ENCODE measurements at regions of chr2 and their contacts with region 1.

Region 1: GRCh38 chr2:161332371-161332967 is 24.2 kb downstream of the PSMD14 start:
- DNase-seq: no peak
- ATAC-seq: no peak
- H3K4me3 ChIP-seq: no peak overlapping the region
- H3K4me3 Mint-ChIP-seq: no peak overlapping the region
- H3K27ac ChIP-seq: no peak overlapping the region
- H3K27ac Mint-ChIP-seq: no peak overlapping the region
- H3K4me1 ChIP-seq: no peaks in the 10 kb centered on the region
- H3K4me1 Mint-ChIP-seq: peaks cover 3% of the 10 kb centered on the region
- H3K27me3 ChIP-seq: no peaks in the 10 kb centered on the region
- H3K27me3 Mint-ChIP-seq: no peaks in the 10 kb centered on the region
- CTCF ChIP-seq: no peak

Region 2: DNA sequence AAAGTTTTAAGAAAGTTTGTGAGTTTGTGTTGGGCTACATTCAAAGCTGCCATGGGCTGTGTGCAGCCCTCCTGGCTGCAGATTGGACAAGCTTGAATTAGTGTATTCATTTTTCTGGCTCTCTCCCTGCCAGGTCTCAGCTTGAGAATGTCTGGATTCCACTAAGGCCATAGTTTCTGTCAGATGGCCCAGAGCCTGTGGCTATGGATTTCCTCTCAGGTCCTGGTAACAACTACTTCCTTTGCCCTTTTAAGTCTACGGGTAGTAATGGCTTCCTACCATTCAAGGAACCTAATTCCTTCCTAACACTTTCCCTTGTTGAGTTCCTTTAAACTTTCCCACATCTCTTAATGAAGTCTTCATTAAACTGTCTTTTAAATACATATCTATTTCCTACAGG is 48.5 kb before region 1 on chr2:
- CTCF ChIA-PET with region 1: no interaction called
- POLR2A ChIA-PET with region 1: no interaction called
- intact Hi-C with region 1: no loop called
- DNase-seq: no peak
- ATAC-seq: no peak
- H3K4me3 ChIP-seq: no peak overlapping the region
- H3K4me3 Mint-ChIP-seq: no peak overlapping the region
- H3K27ac ChIP-seq: no peak overlapping the region
- H3K27ac Mint-ChIP-seq: no peak overlapping the region
- H3K4me1 ChIP-seq: peaks cover 5% of the 10 kb centered on the region
- H3K4me1 Mint-ChIP-seq: no peaks in the 10 kb centered on the region
- H3K27me3 ChIP-seq: peaks cover 0 to 3% of the 10 kb centered on the region in 2 experiments
- H3K27me3 Mint-ChIP-seq: peaks cover 34% of the 10 kb centered on the region
- CTCF ChIP-seq: no peak

Region 3: DNA sequence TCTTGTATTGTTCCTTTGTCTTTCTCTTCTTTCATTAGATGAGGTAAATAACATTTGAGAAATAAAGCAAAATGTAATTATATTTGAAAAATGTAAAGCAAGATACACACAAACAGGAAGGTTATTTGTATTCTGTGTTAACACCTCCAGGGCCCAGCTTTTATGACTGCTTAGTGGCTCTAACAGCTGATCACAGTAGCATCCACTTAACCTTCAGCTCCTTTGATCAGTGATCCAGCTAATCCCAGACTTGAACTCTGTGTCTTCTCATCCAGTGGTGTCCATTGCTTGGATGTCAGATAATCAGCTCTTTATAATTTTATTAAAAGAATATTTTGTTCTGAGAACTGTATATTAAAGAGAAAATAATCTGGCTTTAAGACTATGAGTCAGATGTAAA is 20.2 kb after region 1 on chr2:
- CTCF ChIA-PET with region 1: no interaction called
- POLR2A ChIA-PET with region 1: no interaction called
- intact Hi-C with region 1: loop called in 1 of 2 experiments (anchors 2 kb)
- DNase-seq: no peak
- ATAC-seq: no peak
- H3K4me3 ChIP-seq: no peak overlapping the region
- H3K4me3 Mint-ChIP-seq: no peak overlapping the region
- H3K27ac ChIP-seq: no peak overlapping the region
- H3K27ac Mint-ChIP-seq: no peak overlapping the region
- H3K4me1 ChIP-seq: no peaks in the 10 kb centered on the region
- H3K4me1 Mint-ChIP-seq: peaks cover 42% of the 10 kb centered on the region
- H3K27me3 ChIP-seq: no peaks in the 10 kb centered on the region
- H3K27me3 Mint-ChIP-seq: no peaks in the 10 kb centered on the region
- CTCF ChIP-seq: no peak

Region 4: DNA sequence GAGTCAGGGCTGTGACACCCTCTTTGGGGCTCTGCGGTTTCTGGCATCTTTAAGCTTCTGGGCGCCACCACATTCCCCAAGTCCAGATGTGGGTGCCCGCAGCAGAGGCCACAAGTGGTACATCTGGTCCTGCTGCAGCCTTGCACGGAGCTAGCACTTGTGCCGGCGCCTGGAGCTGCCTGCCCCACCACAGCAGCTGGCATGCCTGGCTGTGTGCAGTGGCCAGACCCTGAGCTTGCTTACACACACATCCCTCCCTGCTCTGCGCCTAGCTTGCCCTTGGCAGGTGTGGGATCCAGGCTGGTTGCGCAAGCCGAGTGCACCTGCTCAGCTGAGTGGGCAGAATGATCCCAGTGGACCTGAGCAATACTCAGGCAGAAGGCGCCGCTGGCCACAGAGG is 319.1 kb after region 1 on chr2:
- CTCF ChIA-PET with region 1: no interaction called
- POLR2A ChIA-PET with region 1: no interaction called
- intact Hi-C with region 1: no loop called
- DNase-seq: peak in 1 of 14 experiments; percentile 3
- ATAC-seq: no peak
- H3K4me3 ChIP-seq: no peak overlapping the region
- H3K4me3 Mint-ChIP-seq: no peak overlapping the region
- H3K27ac ChIP-seq: no peak overlapping the region
- H3K27ac Mint-ChIP-seq: no peak overlapping the region
- H3K4me1 ChIP-seq: no peaks in the 10 kb centered on the region
- H3K4me1 Mint-ChIP-seq: no peaks in the 10 kb centered on the region
- H3K27me3 ChIP-seq: no peaks in the 10 kb centered on the region
- H3K27me3 Mint-ChIP-seq: no peaks in the 10 kb centered on the region
- CTCF ChIP-seq: no peak

Measured in CD4-positive, alpha-beta T cell (primary cell).